ENCODE measurements at regions of chr12 and their contacts with region 1.

Region 1: GRCh38 chr12:12376646-12377448 is 20.0 kb downstream of the BORCS5 start:
- DNase-seq: peak; percentile 22 to 61 (median 36)
- ATAC-seq: peak; percentile 88
- H3K4me3 ChIP-seq: no peak overlapping the region
- H3K27ac ChIP-seq: no peak overlapping the region
- H3K4me1 ChIP-seq: no peaks in the 10 kb centered on the region
- H3K27me3 ChIP-seq: no peaks in the 10 kb centered on the region
- CTCF ChIP-seq: peak; percentile 44 to 84 (median 53); a peak in 4 of 6 replicates
- EP300 ChIP-seq: no peak
- POLR2A ChIP-seq: no peak
- RAD21 ChIP-seq: peak; percentile 94 to 95

Region 2: DNA sequence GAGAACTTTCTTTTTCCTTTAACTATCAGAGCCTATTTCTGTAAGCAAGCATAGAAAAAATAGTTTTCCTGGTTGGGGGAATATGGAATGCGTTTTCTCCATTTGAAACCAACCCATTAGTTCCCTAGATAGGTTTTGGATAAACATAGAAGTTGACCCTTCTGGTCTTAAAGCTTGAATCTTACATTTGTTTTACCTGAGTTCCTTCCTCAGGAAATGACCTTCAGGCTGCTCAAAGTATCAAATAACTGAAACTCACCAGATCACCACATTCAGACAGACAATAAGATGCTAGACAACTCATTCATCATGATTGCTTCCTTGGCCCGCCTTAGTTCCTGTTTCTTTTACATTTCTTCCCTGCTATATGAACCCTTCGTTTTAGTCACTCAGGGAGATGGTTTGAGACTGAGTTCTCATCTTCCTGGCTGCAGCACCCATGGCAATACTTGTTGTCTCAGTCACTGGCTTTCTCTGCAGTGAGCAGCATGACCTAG is 162.2 kb before region 1 on chr12:
- CTCF ChIA-PET with region 1: no interaction called
- POLR2A ChIA-PET with region 1: no interaction called
- in situ Hi-C with region 1: no loop called
- intact Hi-C with region 1: no loop called
- DNase-seq: peak in 1 of 4 experiments; percentile 33
- ATAC-seq: peak; percentile 51; the same call in 2 of the 3 replicates
- H3K4me3 ChIP-seq: no peak overlapping the region
- H3K27ac ChIP-seq: peak overlapping the region; percentile 88; the same call in 2 of the 3 replicates
- H3K4me1 ChIP-seq: peaks cover 0 to 13% of the 10 kb centered on the region in 2 experiments; a peak in 3 of 5 replicates
- H3K27me3 ChIP-seq: no peaks in the 10 kb centered on the region
- CTCF ChIP-seq: no peak
- EP300 ChIP-seq: no peak
- POLR2A ChIP-seq: no peak
- RAD21 ChIP-seq: no peak

Region 3: GRCh38 chr12:12425616-12426015 is 48.8 kb after region 1 on chr12:
- CTCF ChIA-PET with region 1: no interaction called
- POLR2A ChIA-PET with region 1: no interaction called
- in situ Hi-C with region 1: no loop called
- intact Hi-C with region 1: no loop called
- DNase-seq: no peak
- ATAC-seq: no peak
- H3K4me3 ChIP-seq: no peak overlapping the region
- H3K27ac ChIP-seq: no peak overlapping the region
- H3K4me1 ChIP-seq: no peaks in the 10 kb centered on the region; a peak in 1 of 5 replicates
- H3K27me3 ChIP-seq: no peaks in the 10 kb centered on the region
- CTCF ChIP-seq: no peak
- EP300 ChIP-seq: no peak
- POLR2A ChIP-seq: no peak
- RAD21 ChIP-seq: no peak

Region 4: GRCh38 chr12:12562585-12563261 is 185.9 kb after region 1 on chr12 and contains the start of gene DUSP16:
- CTCF ChIA-PET with region 1: interaction called, 3 read pairs
- POLR2A ChIA-PET with region 1: no interaction called
- in situ Hi-C with region 1: no loop called
- intact Hi-C with region 1: loop called (anchors 5 kb)
- DNase-seq: peak; percentile 81 to 90 (median 84)
- ATAC-seq: peak; percentile 94
- H3K4me3 ChIP-seq: peak within 1 kb of the TSS; percentile 82
- H3K27ac ChIP-seq: peak within 1 kb of the TSS; percentile 97
- H3K4me1 ChIP-seq: peaks cover 9 to 11% of the 10 kb centered on the region in 2 experiments; a peak in 4 of 5 replicates
- H3K27me3 ChIP-seq: no peaks in the 10 kb centered on the region
- CTCF ChIP-seq: peak in 1 of 3 experiments; percentile 27; a peak in 2 of 6 replicates
- EP300 ChIP-seq: no peak
- POLR2A ChIP-seq: no peak
- RAD21 ChIP-seq: no peak
- polyA plus RNA-seq, gene DUSP16: 0.70 to 1.1 TPM

Region 5: GRCh38 chr12:12611512-12612306 is 234.9 kb after region 1 on chr12 and contains the start of gene CREBL2:
- CTCF ChIA-PET with region 1: no interaction called
- POLR2A ChIA-PET with region 1: no interaction called
- in situ Hi-C with region 1: no loop called
- intact Hi-C with region 1: loop called (anchors 1 kb)
- DNase-seq: peak; percentile 77 to 90 (median 80)
- ATAC-seq: peak; percentile 92
- H3K4me3 ChIP-seq: peak within 1 kb of the TSS; percentile 61
- H3K27ac ChIP-seq: peak within 1 kb of the TSS; percentile 76
- H3K4me1 ChIP-seq: peaks cover 0 to 11% of the 10 kb centered on the region in 2 experiments; a peak in 3 of 5 replicates
- H3K27me3 ChIP-seq: no peaks in the 10 kb centered on the region
- CTCF ChIP-seq: no peak
- EP300 ChIP-seq: no peak
- POLR2A ChIP-seq: peak; percentile 75
- RAD21 ChIP-seq: no peak
- polyA plus RNA-seq, gene CREBL2: 1.7 to 1.9 TPM

Region 6: DNA sequence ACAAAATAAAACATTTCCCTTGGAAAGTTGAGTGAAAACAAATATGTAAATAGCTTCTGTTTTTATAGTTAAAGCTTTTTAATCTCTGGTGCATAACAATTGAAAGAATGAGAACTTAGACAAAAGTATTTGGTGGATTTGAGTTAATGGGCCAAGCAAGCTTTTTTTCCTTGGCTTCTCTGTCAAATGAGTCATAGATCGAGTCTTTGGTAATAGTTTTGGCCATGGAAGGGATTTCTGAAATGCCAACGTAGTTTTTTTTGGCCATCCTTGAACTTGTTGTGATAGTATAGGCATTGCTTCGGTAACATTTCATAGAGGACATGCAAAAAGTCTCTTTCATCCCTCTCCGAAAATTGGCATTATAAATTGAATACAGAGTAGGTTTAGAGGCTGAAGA is 284.2 kb after region 1 on chr12:
- CTCF ChIA-PET with region 1: interaction called, 16 read pairs
- POLR2A ChIA-PET with region 1: no interaction called
- in situ Hi-C with region 1: no loop called
- intact Hi-C with region 1: loop called (anchors 1 kb)
- DNase-seq: no peak
- ATAC-seq: no peak
- H3K4me3 ChIP-seq: no peak overlapping the region
- H3K27ac ChIP-seq: no peak overlapping the region
- H3K4me1 ChIP-seq: peaks cover 0 to 2% of the 10 kb centered on the region in 2 experiments; a peak in 3 of 5 replicates
- H3K27me3 ChIP-seq: no peaks in the 10 kb centered on the region
- CTCF ChIP-seq: no peak
- EP300 ChIP-seq: no peak
- POLR2A ChIP-seq: no peak
- RAD21 ChIP-seq: no peak

Measured in K562 (cell line).